Prostate gland (tissue), 2 donors: ENCODE measurements at regions of chr2 and their contacts with region 1.

Region 1: DNA sequence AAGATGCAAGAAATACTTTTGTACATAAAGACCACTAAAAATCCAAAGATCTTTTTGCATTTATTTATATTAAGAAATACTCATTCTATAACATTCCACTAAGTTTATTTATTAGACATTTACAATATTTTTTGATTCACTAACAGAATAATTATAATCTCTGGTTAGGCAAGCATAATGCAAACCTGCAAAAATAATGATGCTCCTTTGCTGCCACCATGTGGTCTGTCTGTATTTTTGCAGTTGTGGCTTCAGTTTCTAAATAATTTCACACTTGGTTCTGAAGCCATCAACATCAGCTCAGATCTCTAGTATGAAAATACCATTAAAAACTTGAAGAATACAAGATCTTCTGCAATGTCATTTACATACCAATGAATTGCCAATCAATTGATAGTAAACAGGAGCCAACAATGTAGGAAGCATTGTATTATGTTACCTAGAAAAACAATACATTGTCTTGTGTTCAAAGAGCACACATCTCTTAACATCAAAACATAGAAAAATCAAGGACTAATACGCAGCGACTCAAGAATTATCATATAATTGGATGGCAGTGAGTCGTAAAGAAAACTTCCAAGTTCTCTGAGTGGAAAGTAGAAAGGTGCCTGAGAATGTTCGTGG is 28.8 kb upstream of the WDR75 start:
- DNase-seq: no peak
- H3K4me3 ChIP-seq: no peak overlapping the region
- H3K27ac ChIP-seq: no peak overlapping the region
- H3K4me1 ChIP-seq: no peaks in the 10 kb centered on the region
- H3K27me3 ChIP-seq: no peaks in the 10 kb centered on the region
- CTCF ChIP-seq: peak; percentile 39 to 77 (median 66)
- POLR2A ChIP-seq: no peak

Region 2: DNA sequence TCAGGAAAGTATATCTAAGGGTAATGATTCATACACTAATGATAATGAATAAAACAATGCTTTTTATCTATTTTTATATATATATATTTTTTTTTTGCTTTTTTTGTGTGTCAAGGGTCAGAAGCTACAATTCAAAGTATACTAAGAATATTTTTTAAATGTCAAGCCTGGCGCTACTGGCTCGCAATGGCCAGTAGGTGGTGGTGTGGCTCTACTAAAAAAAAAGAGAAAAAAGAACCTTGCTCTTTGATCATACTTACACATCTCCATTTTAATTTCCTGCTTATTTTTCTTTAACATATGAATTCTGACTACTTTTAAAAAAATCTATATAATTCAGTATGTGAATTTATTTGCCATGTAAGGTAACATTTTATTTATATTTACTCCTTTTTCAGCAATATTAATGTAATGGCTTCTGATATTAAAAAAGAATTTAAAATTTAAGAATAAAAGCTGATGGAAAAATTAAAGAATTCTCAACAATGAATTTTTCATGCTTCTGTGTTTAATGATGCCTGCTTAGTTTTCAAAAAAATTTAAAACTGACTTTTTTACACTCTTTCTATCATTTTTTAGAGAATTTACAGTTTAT is 887.8 kb before region 1 on chr2:
- intact Hi-C with region 1: loop called (anchors 5 kb)
- DNase-seq: peak; percentile 11
- H3K4me3 ChIP-seq: no peak overlapping the region
- H3K27ac ChIP-seq: no peak overlapping the region
- H3K4me1 ChIP-seq: no peaks in the 10 kb centered on the region
- H3K27me3 ChIP-seq: no peaks in the 10 kb centered on the region
- CTCF ChIP-seq: peak; percentile 56 to 74 (median 71)
- POLR2A ChIP-seq: no peak

Region 3: GRCh38 chr2:189095101-189095500 is 317.3 kb before region 1 on chr2:
- intact Hi-C with region 1: loop called (anchors 2 kb)
- DNase-seq: no peak
- H3K4me3 ChIP-seq: no peak overlapping the region
- H3K27ac ChIP-seq: no peak overlapping the region
- H3K4me1 ChIP-seq: no peaks in the 10 kb centered on the region
- H3K27me3 ChIP-seq: no peaks in the 10 kb centered on the region
- CTCF ChIP-seq: no peak
- POLR2A ChIP-seq: no peak

Region 4: GRCh38 chr2:189115126-189115525 is 297.3 kb before region 1 on chr2:
- intact Hi-C with region 1: loop called (anchors 5 kb)
- DNase-seq: no peak
- H3K4me3 ChIP-seq: no peak overlapping the region
- H3K27ac ChIP-seq: no peak overlapping the region
- H3K4me1 ChIP-seq: no peaks in the 10 kb centered on the region
- H3K27me3 ChIP-seq: no peaks in the 10 kb centered on the region
- CTCF ChIP-seq: no peak
- POLR2A ChIP-seq: no peak